Colonic mucosa (tissue), 4 donors: ENCODE measurements at regions of chr15 and their contacts with region 1.

Region 1: DNA sequence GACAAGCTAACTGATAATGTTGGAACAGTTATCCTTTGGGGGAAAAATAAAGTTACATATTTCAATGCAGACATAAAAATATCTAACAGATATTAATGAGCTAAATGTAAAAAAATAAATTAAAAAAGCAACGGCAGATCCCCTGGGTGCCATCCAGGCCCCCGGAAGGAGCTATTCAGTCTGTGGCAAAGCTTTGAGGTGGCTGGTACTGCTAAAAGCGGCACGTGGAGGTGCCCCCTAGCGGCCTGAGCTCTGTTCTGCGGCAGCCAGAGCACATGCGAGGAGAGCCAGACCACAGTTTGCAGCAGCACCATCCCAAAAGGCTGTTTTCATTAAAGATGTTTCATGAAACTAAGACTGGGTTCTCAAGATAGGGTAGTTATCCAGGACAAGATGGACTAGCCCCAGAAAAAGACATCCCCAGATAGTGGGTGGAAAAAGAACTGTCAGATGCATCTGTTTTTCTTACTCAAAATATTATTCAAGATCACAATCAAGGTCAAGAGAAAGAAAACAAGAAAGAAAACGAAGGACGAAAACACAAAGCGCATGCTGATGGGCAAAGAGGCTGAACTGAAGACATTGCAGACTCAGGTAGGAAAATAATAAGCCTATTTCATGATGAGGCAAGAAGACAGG is 18.7 kb downstream of the AP3S2 start:
- DNase-seq: peak; percentile 87
- H3K4me3 ChIP-seq: no peak overlapping the region
- H3K27ac ChIP-seq: no peak overlapping the region
- H3K4me1 ChIP-seq: no peaks in the 10 kb centered on the region
- H3K27me3 ChIP-seq: no peaks in the 10 kb centered on the region
- CTCF ChIP-seq: peak; percentile 94

Region 2: DNA sequence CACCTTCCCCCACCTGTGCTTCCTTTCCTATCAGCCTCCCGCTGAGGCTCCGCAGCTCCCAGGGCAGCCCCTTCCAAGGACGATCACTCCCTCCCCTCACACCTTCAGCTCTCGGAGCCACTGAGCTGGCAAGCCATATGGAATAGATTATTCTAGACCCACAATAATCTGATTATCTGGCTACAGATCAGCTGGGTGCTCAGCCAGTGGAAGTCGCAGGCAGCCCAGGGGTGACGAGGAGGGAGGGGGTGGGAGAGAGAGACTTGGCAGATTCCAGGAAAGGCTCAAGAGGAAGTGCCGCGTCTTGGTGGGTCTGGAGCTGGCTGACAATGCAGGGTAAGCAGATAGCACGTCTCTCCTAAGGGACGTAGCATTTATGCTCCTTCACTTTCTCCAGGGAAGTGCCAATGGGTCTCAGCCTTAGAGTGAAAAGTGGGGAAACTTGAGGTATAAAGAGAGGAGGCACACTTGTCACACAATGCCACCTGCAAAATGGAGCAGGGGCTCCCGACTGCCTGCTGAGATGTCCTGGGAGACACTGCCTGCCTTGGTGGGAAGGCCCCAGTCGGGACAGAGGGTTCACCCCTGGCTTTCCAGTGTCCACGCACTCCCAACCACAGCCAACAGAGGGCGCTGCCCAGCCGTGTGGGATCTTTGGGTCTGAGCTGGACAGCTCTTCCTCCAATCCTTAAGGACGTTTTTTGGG is 114.6 kb before region 1 on chr15:
- intact Hi-C with region 1: loop called (anchors 2 kb)
- DNase-seq: peak; percentile 94
- H3K4me3 ChIP-seq: no peak overlapping the region
- H3K27ac ChIP-seq: no peak overlapping the region
- H3K4me1 ChIP-seq: peaks cover 12% of the 10 kb centered on the region
- H3K27me3 ChIP-seq: no peaks in the 10 kb centered on the region
- CTCF ChIP-seq: peak; percentile 98